CD14-positive monocyte (primary cell): ENCODE measurements at regions of chr3 and their contacts with region 1.

Region 1: DNA sequence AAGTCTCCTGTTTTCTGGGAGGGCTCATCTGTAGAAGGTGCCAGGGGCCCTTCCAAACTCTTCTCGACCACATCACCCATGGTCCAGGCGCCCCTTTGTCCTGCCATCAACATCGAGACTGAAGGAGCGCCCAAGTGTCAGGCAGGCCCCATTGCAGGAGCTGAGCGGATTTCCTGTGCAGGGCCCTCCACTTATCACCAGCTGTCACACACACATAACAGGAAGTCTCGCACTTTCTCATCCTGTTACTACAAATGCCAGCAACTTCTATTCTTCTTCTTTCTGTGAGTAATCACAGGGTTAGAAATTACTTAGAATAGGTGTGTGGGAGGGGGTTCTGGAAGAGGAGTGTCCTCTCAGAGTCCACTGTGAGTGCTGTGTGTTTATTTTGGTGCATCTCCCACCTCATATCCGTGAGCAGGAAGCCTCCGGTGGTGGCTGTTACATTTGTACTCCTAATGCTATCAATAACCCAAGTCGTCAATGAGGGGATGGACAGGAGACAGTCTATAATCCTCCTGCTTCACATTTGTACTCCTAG is at the start of gene KLHL6:
- DNase-seq: peak; percentile 75 to 90 (median 87)
- H3K4me3 ChIP-seq: peak within 1 kb of the TSS; percentile 57 to 85 (median 82)
- H3K4me3 Mint-ChIP-seq: peak within 1 kb of the TSS; percentile 95 to 99
- H3K27ac ChIP-seq: peak within 1 kb of the TSS; percentile 92 to 95
- H3K27ac Mint-ChIP-seq: peak within 1 kb of the TSS; percentile 96 to 100 (median 99)
- H3K4me1 ChIP-seq: peaks cover 50 to 58% of the 10 kb centered on the region in 2 donors
- H3K4me1 Mint-ChIP-seq: peaks cover 52% of the 10 kb centered on the region
- H3K27me3 ChIP-seq: no peaks in the 10 kb centered on the region
- H3K27me3 Mint-ChIP-seq: peaks cover 0 to 3% (median 0%) of the 10 kb centered on the region in 3 donors
- CTCF ChIP-seq: no peak
- polyA plus RNA-seq, gene KLHL6: 5.7 to 15.2 (median 10.6) TPM

Region 2: GRCh38 chr3:183468424-183468823 is 87.2 kb before region 1 on chr3:
- intact Hi-C with region 1: loop called in 1 of 2 experiments (anchors 5 kb)
- DNase-seq: no peak
- H3K4me3 ChIP-seq: no peak overlapping the region
- H3K4me3 Mint-ChIP-seq: no peak overlapping the region
- H3K27ac ChIP-seq: no peak overlapping the region
- H3K27ac Mint-ChIP-seq: no peak overlapping the region
- H3K4me1 ChIP-seq: peaks cover 4 to 11% of the 10 kb centered on the region in 2 donors
- H3K4me1 Mint-ChIP-seq: peaks cover 3% of the 10 kb centered on the region
- H3K27me3 ChIP-seq: no peaks in the 10 kb centered on the region
- H3K27me3 Mint-ChIP-seq: peaks cover 0 to 2% (median 1%) of the 10 kb centered on the region in 3 donors
- CTCF ChIP-seq: no peak

Region 3: DNA sequence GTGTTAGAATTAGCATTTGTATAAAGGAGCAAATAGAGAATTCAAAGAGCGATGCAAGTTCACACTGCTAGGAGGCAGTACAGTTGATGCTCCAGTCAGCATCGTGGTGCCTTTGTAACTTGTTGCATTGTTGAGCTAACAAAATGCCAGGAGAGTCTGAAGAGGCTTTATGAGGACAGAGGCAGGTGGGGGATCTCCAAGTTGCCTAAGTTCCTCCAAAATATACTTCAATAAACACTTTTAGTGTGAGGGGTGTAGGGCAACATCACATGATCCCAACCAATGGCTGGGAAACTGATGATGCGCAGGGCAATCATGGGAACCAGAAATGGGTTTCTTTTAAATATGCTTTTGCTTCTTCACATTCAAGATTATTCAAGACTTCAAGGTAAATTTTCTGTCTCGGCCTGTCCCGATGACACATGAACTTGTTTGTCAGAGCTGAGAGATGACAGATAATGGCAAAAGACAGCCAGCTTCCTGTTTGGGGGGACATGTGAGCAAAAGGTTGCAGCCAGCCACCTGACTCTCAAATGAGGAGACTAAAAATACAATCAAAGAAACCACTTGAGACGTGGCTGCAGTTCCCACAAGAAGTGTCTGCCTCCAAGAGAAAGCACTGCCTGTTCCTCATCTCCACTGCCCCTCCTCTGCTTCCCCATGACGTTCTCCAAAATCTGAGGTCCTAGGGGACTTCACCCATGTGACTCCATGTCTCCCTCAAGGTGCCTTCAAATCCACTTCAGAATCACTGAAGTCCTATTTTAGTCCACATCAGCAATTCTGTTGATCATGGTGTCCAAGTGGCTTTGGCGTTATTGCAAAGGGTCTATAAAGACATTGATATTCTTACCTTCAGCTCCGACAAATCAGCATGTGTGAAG is 39.4 kb before region 1 on chr3:
- intact Hi-C with region 1: loop called in 1 of 2 experiments (anchors 5 kb)
- DNase-seq: peak; percentile 40 to 84 (median 54)
- H3K4me3 ChIP-seq: no peak overlapping the region
- H3K4me3 Mint-ChIP-seq: no peak overlapping the region
- H3K27ac ChIP-seq: peak overlapping the region; percentile 21 to 60
- H3K27ac Mint-ChIP-seq: peak overlapping the region; percentile 16 to 91 (median 62)
- H3K4me1 ChIP-seq: peaks cover 13 to 24% of the 10 kb centered on the region in 2 donors
- H3K4me1 Mint-ChIP-seq: peaks cover 38% of the 10 kb centered on the region
- H3K27me3 ChIP-seq: no peaks in the 10 kb centered on the region
- H3K27me3 Mint-ChIP-seq: peaks cover 0 to 3% (median 0%) of the 10 kb centered on the region in 3 donors
- CTCF ChIP-seq: no peak

Region 4: GRCh38 chr3:183537295-183537730 is 18.3 kb before region 1 on chr3:
- intact Hi-C with region 1: loop called in 1 of 2 experiments (anchors 1 kb)
- DNase-seq: peak; percentile 97 to 99 (median 98)
- H3K4me3 ChIP-seq: peak overlapping the region in 1 of 3 experiments; percentile 39
- H3K4me3 Mint-ChIP-seq: peak overlapping the region; percentile 60 to 77
- H3K27ac ChIP-seq: peak overlapping the region; percentile 89 to 98
- H3K27ac Mint-ChIP-seq: peak overlapping the region; percentile 98 to 100 (median 99)
- H3K4me1 ChIP-seq: peaks cover 66 to 82% of the 10 kb centered on the region in 2 donors
- H3K4me1 Mint-ChIP-seq: peaks cover 88% of the 10 kb centered on the region
- H3K27me3 ChIP-seq: no peaks in the 10 kb centered on the region
- H3K27me3 Mint-ChIP-seq: peaks cover 0 to 2% (median 0%) of the 10 kb centered on the region in 3 donors
- CTCF ChIP-seq: no peak

Region 5: DNA sequence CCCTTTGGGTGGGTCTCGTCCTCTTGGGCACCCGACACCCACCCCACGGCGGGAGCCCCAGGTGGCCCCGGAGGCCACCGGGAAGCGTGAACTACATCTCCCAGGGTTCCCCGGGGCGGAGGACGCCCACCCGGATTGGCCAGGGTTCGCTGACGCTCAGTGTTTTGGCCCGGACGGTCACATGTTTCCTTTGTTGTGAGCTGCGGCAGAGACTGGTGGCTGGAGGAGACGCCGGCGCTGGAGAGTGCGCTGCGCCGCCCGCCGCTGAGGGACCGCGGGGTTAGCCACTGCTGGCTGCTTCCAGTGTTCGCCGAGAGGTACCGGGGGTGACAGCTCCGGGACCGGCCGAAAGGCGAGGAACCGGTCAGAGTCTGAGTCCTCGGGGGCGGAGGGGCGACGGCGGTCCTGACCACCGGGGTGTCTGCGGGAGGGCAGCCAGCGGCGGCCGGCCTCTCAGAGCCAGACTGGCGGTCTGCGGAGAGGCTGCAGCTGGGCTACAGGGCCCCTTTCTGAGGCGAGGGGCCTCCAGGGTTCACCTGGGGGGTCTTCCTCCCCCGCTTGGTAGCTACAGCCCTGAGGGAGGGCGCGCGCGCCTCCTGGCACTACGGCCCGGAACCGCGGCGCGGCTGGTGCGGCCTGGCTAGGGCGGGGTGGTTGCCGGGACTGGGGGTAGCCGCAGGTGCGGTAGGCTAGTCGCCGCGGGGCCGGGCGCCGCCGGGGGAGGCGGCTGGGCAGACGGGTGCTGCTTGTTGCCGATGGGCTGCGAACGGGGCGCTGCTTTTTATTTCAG is 80.0 kb after region 1 on chr3 and contains the start of gene KLHL24:
- intact Hi-C with region 1: loop called (anchors 1 to 10 kb)
- DNase-seq: peak; percentile 81 to 88 (median 85)
- H3K4me3 ChIP-seq: peak within 1 kb of the TSS; percentile 93 to 98 (median 94)
- H3K4me3 Mint-ChIP-seq: peak within 1 kb of the TSS; percentile 89 to 93
- H3K27ac ChIP-seq: peak within 1 kb of the TSS; percentile 89 to 90
- H3K27ac Mint-ChIP-seq: peak within 1 kb of the TSS; percentile 90 to 97 (median 94)
- H3K4me1 ChIP-seq: peaks cover 17 to 24% of the 10 kb centered on the region in 2 donors
- H3K4me1 Mint-ChIP-seq: peaks cover 22% of the 10 kb centered on the region
- H3K27me3 ChIP-seq: no peaks in the 10 kb centered on the region
- H3K27me3 Mint-ChIP-seq: peaks cover 0 to 2% (median 0%) of the 10 kb centered on the region in 3 donors
- CTCF ChIP-seq: no peak
- polyA plus RNA-seq, gene KLHL24: 24.1 to 31.7 (median 31.4) TPM